Heart left ventricle (tissue), 16 donors: ENCODE measurements at regions of chr3 and their contacts with region 1.

Region 1: GRCh38 chr3:190205739-190206138 is 85.0 kb upstream of the P3H2 start:
- DNase-seq: no peak
- ATAC-seq: no peak
- H3K4me3 ChIP-seq: no peak overlapping the region
- H3K27ac ChIP-seq: no peak overlapping the region
- H3K4me1 ChIP-seq: peaks cover 0 to 2% (median 0%) of the 10 kb centered on the region in 12 donors
- H3K27me3 ChIP-seq: no peaks in the 10 kb centered on the region
- CTCF ChIP-seq: no peak
- POLR2A ChIP-seq: no peak

Region 2: DNA sequence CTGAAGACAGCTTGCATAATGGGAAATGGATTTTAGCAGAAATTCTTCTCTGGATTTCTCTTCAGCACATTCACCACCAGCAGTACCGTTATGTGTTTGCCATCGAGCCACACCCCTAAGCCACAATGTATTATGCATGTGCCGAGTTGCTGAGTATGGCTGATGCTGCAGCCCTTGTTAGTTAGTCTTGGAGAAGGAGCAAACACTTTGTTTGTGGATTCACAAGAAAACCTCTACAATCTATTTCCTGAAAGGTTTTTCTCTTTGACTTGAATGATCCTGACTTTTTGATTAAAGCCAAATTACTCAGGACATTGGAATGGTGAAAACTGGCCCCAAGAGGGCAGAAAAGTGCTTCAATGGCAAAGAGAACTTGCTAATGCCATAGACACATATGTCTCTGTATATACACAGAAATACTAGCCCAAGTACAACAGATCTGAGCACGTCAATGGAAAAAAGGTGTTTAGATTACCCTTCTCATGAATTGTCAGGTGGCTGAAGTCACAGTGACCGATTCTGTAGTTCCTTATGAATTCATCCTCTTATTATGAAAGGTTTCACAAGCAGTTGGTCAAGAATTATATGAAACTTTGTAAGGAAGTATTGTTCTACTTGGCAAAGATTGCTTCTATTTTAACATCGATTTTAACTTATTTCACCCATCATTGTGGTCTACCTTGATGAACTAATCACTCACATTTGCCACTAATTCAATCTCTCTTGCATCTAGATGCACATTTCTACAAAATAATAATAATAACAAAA is 188.0 kb before region 1 on chr3:
- intact Hi-C with region 1: loop called in 3 of 10 experiments (anchors 5 kb)
- DNase-seq: no peak
- ATAC-seq: peak in 2 of 4 donors; percentile 42 to 81
- H3K4me3 ChIP-seq: no peak overlapping the region
- H3K27ac ChIP-seq: no peak overlapping the region
- H3K4me1 ChIP-seq: peaks cover 0 to 10% (median 0%) of the 10 kb centered on the region in 12 donors
- H3K27me3 ChIP-seq: no peaks in the 10 kb centered on the region
- CTCF ChIP-seq: peak in 9 of 12 donors; percentile 15 to 57 (median 32)
- POLR2A ChIP-seq: no peak

Region 3: DNA sequence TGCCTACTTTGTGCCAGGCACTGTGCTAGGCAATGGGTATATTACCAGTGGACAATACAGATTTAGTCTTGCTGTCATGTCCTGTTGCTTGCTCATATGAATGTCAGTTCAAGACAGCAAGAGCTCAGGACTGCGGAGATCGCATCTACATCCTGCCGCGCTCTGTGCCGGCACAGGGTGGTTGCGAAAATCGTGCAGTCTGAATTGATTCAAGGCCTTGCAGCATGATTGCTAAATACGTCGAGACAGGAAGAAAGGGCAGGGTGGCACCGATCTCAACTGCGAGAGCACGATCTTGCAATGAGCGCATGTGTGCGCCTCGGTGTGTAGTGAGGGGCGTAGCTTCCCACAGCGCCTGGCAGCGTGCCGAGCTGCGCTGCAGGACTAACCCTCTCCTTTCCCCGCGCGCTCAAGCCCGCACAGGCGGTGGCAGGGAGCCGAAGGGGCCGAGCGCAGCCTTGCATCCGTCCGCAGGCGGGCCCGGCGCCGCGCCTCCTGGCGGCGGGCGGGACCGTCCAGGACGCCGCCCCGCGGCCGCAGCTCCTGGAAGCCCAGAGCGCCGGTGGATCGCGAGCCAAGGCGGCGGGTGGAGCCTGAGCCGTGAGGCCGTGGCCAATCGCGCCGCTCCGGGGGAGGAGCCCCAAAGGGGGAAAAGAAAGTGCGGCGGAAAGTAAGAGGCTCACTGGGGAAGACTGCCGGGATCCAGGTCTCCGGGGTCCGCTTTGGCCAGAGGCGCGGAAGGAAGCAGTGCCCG is 307.8 kb after region 1 on chr3 and contains the start of gene IL1RAP:
- intact Hi-C with region 1: no loop called
- DNase-seq: peak; percentile 92 to 96 (median 94)
- ATAC-seq: peak; percentile 95 to 99 (median 98)
- H3K4me3 ChIP-seq: peak within 1 kb of the TSS; percentile 65 to 96 (median 80)
- H3K27ac ChIP-seq: peak within 1 kb of the TSS in 11 of 12 donors; percentile 43 to 95 (median 78)
- H3K4me1 ChIP-seq: peaks cover 0 to 35% (median 8%) of the 10 kb centered on the region in 12 donors
- H3K27me3 ChIP-seq: no peaks in the 10 kb centered on the region
- CTCF ChIP-seq: peak; percentile 53 to 91 (median 84)
- POLR2A ChIP-seq: peak in 1 of 2 donors; percentile 84
- total RNA-seq, gene IL1RAP: 3.9 to 16.4 (median 8.2) TPM